ENCODE measurements at regions of chr1 and their contacts with region 1.

Region 1: DNA sequence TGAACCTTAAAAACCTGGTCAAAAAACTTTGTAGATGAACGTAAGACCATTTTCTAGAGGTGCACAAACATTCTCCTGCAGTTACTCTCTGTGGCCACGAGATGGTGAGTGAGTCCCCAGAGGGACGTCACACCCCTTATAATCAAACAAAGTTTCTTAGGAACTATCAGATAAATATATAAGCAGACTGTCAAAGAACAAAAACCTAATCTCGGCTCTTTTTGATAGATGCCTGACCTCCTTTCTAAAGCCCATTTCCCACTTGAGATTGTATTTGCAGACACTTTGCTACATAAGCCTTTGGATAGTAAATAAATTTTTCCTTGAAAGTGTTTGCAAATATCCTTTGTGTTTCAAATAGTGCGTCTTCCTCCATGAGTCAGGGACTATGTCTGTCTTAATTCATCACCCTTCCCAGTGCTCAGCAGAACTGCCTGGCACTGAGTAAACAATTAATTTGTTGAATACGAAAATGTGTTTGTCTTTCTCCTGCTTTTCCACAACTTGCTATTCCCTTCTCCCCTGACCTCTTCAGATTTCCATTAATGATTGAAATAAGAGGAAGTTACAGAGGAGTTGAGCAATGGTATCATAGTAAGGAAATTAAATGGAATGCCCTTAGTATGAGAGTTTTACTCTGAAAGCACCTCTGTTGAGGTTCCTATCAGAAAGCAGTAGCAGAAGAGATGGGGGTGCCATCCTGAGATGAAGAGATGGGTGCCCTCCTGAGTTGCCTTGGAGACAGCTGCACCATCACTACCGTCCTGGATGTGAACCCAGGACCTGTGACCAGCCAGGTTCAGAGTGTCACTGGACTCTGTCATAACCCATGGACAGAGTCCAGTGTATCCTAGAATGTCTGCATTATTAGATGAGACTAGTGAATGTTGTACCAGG is 57.8 kb upstream of the RAVER2 start:
- DNase-seq: no peak
- ATAC-seq: peak; percentile 82
- H3K4me3 ChIP-seq: no peak overlapping the region
- H3K27ac ChIP-seq: no peak overlapping the region
- H3K4me1 ChIP-seq: peaks cover 17% of the 10 kb centered on the region
- H3K27me3 ChIP-seq: no peaks in the 10 kb centered on the region
- CTCF ChIP-seq: peak; percentile 90

Region 2: DNA sequence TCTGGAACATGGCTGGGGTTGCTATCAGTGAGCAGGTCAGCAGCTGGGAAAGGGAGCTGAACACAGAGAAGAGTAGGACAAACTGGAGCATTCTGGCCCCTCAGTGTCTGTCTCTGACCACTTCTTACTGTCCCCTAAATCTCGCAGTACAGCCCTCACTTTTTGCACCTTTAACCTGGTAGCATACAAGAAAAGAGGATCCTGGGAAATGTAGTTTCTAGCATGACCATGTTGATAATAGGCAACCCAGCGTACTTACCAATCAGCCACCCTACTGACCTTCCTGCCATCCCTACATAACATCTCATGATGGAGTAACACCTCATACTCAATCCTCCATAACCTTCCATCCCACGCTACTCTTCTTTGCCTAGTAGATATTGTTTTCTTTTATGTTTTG is 41.3 kb before region 1 on chr1:
- intact Hi-C with region 1: no loop called
- DNase-seq: no peak
- ATAC-seq: no peak
- H3K4me3 ChIP-seq: no peak overlapping the region
- H3K27ac ChIP-seq: no peak overlapping the region
- H3K4me1 ChIP-seq: no peaks in the 10 kb centered on the region
- H3K27me3 ChIP-seq: no peaks in the 10 kb centered on the region
- CTCF ChIP-seq: no peak

Region 3: DNA sequence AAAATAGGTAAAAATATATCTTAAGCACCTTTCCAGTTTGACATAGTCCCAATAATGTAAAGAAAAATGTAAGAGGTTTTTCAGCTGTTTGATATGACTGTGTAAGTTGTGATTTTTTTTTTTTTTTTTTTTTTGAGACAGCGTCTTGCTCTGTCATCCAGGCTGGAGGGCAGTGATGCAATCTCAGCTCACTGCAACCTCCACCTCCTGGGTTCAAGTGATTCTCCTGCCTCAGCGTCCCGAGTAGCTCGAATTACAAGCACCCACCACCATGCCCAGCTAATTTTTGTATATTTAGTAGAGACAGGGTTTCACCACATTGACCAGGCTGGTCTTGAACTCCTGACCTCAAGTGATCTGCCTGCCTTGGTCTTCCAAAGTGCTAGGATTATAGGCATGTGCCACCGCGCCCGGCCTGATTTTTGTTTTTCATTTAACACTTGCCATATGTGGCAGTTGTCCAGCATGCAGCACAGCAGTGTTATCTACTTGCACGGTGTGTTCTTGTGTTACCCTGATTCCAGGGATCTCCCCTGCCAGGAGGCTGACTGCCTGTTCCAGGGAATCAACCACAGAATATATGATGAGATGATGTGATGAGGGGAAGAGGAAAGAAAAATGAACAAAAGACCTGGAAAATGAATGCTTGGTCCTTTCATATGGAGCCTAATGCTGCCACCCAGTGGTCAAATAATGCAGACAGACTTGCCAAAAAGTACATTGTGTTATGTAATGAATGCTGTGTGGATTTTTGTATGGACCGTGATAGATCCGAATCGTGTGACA is 136.8 kb after region 1 on chr1:
- intact Hi-C with region 1: loop called (anchors 10 kb)
- DNase-seq: peak; percentile 61
- ATAC-seq: peak; percentile 90
- H3K4me3 ChIP-seq: no peak overlapping the region
- H3K27ac ChIP-seq: no peak overlapping the region
- H3K4me1 ChIP-seq: no peaks in the 10 kb centered on the region
- H3K27me3 ChIP-seq: no peaks in the 10 kb centered on the region
- CTCF ChIP-seq: peak; percentile 84

Region 4: GRCh38 chr1:65292861-65293593 is 606.0 kb after region 1 on chr1:
- intact Hi-C with region 1: no loop called
- DNase-seq: no peak
- ATAC-seq: no peak
- H3K4me3 ChIP-seq: no peak overlapping the region
- H3K27ac ChIP-seq: no peak overlapping the region
- H3K4me1 ChIP-seq: no peaks in the 10 kb centered on the region
- H3K27me3 ChIP-seq: no peaks in the 10 kb centered on the region
- CTCF ChIP-seq: no peak